MCF 10A (cell line): ENCODE measurements at regions of chr18 and their contacts with region 1.

Region 1: GRCh38 chr18:51029694-51030536 is at the start of gene SMAD4:
- DNase-seq: peak; percentile 96
- H3K4me3 Mint-ChIP-seq: peak within 1 kb of the TSS; percentile 96
- H3K27ac Mint-ChIP-seq: peak within 1 kb of the TSS; percentile 100
- H3K4me1 Mint-ChIP-seq: peaks cover 22% of the 10 kb centered on the region
- H3K27me3 Mint-ChIP-seq: no peaks in the 10 kb centered on the region
- CTCF ChIP-seq: no peak
- total RNA-seq, gene SMAD4: 75.8 and 84.4 TPM in 2 replicates

Region 2: DNA sequence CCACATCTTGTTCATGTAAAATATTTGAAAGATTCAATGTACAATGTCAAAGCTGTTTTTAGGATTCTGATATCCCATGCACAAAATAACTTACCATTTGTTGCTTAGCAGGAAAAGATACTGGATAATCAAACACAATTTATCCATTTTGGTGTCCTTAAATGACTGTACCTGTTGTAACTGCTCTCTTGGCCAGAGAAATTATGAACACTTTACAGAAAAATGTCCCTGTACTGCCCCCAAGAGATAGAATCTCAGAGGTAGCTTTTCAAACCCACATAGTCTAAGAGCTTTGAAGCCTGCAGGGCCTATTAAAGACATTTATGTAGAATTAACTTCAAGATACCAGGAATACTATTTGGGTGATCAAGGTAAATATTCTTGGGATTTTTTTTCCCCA is 163.2 kb before region 1 on chr18:
- CTCF ChIA-PET with region 1: interaction called, 3 read pairs
- POLR2A ChIA-PET with region 1: interaction called, 22 read pairs
- intact Hi-C with region 1: no loop called
- DNase-seq: peak; percentile 22
- H3K4me3 Mint-ChIP-seq: no peak overlapping the region
- H3K27ac Mint-ChIP-seq: no peak overlapping the region
- H3K4me1 Mint-ChIP-seq: peaks cover 12% of the 10 kb centered on the region
- H3K27me3 Mint-ChIP-seq: no peaks in the 10 kb centered on the region
- CTCF ChIP-seq: peak; percentile 7

Region 3: DNA sequence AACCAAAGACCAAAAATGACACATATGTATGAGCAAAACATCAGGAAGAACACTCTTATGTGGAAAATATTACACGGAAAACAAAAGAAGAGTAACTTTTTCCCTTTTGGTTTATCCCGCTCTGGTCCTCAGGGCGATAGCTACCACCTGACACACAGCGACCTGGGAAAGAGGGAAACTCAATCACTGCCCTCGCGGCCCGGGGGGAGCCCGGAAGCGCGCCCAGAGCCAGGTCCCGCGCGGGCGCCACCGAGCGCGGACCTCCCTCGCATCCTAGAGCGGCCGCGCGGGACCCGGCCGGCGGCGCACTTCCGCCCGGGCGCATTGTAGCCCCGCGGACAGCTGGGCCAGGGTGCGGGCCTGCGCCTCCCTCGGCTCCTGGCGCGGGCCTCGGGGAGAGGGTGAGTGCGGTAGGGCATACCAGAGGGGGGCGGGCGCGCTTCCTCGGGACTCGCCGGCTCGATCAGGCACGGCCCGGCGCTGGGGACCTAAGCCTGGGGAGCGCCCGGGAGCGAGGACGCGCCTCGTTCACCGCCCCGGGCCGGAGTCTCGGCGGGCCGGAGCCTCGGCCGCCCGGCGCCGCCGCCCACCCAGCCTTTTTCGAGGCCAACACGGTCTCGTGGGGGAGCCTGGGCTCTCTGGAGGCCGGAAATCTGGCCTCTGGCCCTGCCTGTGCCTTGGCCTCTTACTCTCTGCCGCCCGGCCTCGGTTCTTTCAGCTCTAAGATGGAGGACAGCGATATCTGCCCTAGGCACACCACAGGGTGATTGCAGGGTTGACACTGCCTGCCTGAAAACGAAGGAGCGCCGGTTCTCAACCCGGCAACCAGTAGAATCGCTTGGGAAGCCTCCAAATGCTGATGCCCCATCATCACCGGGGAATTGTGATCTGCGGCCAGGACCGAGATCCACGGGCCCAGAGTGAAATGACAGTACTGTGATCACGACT is 61.9 kb before region 1 on chr18 and contains the start of gene ELAC1:
- CTCF ChIA-PET with region 1: no interaction called
- POLR2A ChIA-PET with region 1: interaction called, 187 read pairs
- intact Hi-C with region 1: loop called (anchors 1 kb)
- DNase-seq: peak; percentile 72
- H3K4me3 Mint-ChIP-seq: peak within 1 kb of the TSS; percentile 68
- H3K27ac Mint-ChIP-seq: peak within 1 kb of the TSS; percentile 75
- H3K4me1 Mint-ChIP-seq: peaks cover 27% of the 10 kb centered on the region
- H3K27me3 Mint-ChIP-seq: no peaks in the 10 kb centered on the region
- CTCF ChIP-seq: no peak
- total RNA-seq, gene ELAC1: 10.8 and 14.0 TPM in 2 replicates

Region 4: DNA sequence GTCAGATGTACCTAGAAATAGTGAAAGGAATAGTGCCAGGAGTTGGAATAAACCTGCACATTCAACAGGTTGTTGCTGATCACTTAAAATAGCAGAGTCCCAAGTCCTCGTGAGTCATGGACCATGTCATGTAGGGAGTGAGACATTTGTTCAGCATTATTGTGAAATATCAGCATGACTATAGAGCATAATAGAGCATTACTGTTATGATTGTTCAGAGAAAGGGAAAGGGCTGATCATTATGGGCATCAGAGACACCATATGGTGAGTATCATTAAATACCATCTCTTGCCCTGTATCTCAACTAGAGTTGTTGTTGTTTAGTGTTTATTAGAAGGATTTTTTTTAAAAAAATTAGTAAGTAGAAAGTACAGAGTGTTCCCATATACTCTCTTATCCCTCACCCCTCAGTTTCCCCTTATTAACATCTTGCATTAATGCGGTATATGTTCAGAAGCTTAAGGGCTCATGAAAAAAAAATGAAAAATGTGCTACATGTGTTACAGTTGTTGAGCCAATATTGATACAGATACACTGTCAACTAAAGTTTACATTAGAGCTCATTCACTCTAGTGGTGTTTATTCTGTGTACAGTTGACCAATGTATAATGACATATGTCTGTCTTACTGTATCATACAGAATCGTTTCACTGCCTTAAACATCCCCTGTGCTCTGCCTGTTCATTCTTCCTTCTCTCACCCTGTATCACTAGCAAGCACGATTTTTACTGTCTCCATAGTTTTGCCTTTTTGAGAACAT is 56.4 kb before region 1 on chr18:
- CTCF ChIA-PET with region 1: no interaction called
- POLR2A ChIA-PET with region 1: interaction called, 187 read pairs
- intact Hi-C with region 1: loop called (anchors 1 kb)
- DNase-seq: peak; percentile 84
- H3K4me3 Mint-ChIP-seq: no peak overlapping the region
- H3K27ac Mint-ChIP-seq: peak overlapping the region; percentile 46
- H3K4me1 Mint-ChIP-seq: peaks cover 39% of the 10 kb centered on the region
- H3K27me3 Mint-ChIP-seq: no peaks in the 10 kb centered on the region
- CTCF ChIP-seq: no peak

Region 5: GRCh38 chr18:50982802-50983179 is 47.1 kb before region 1 on chr18:
- CTCF ChIA-PET with region 1: interaction called, 4 read pairs
- POLR2A ChIA-PET with region 1: interaction called, 10 read pairs
- intact Hi-C with region 1: no loop called
- DNase-seq: no peak
- H3K4me3 Mint-ChIP-seq: no peak overlapping the region
- H3K27ac Mint-ChIP-seq: peak overlapping the region; percentile 49
- H3K4me1 Mint-ChIP-seq: peaks cover 7% of the 10 kb centered on the region
- H3K27me3 Mint-ChIP-seq: no peaks in the 10 kb centered on the region
- CTCF ChIP-seq: no peak

Region 6: DNA sequence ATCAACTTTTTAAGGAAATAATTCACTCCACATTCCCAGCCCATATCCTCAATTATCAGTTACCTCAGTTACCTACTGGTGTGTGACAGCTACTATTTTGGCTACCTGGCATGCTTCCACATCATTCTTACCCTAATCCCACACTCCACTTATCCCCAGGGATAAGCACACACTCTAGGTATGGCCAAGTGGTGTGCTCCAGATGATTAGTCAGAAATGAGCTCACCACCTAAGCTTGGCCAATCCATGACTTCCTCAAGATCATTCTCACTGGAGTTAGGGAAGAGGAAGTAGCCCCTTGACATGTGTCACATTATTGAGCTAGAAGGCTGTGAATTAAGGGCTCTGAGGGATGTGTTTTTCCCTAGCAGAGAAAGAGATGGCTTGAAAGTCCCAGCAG is 20.8 kb before region 1 on chr18:
- CTCF ChIA-PET with region 1: interaction called, 3 read pairs
- POLR2A ChIA-PET with region 1: interaction called, 10 read pairs
- intact Hi-C with region 1: no loop called
- DNase-seq: peak; percentile 6
- H3K4me3 Mint-ChIP-seq: no peak overlapping the region
- H3K27ac Mint-ChIP-seq: no peak overlapping the region
- H3K4me1 Mint-ChIP-seq: peaks cover 13% of the 10 kb centered on the region
- H3K27me3 Mint-ChIP-seq: no peaks in the 10 kb centered on the region
- CTCF ChIP-seq: no peak

Region 7: DNA sequence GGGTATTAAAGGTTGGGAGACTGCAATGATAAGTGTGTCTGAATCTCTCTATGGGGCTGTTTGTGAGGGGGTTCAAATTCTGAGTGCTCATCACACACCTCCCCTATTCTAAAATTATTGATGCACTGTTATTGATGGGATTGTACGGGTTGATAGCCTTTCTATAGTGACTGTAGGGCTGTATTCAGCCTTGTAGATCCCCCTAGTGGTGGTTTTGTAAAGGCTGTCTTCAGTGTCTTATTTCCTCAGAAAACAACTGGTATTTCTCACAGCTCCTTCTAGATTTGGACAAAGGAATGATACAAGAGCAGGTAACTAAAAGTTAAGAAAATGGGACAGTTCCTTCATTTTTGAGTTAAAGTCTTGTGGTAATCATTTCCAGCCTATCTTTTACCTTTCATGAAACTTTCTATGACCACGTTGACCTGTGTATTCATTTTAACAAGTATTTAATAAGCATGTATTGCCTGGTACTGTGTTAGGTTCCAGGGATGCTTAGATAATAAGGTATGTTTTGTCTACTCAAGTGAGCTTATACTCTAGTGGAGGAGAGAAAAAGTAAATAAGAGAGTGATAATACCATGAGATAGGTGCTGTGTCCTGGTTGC is 21.3 kb after region 1 on chr18:
- CTCF ChIA-PET with region 1: interaction called, 13 read pairs
- POLR2A ChIA-PET with region 1: interaction called, 85 read pairs
- intact Hi-C with region 1: no loop called
- DNase-seq: peak; percentile 57
- H3K4me3 Mint-ChIP-seq: no peak overlapping the region
- H3K27ac Mint-ChIP-seq: no peak overlapping the region
- H3K4me1 Mint-ChIP-seq: peaks cover 4% of the 10 kb centered on the region
- H3K27me3 Mint-ChIP-seq: no peaks in the 10 kb centered on the region
- CTCF ChIP-seq: peak; percentile 72